Mammary epithelial cell (primary cell): ENCODE measurements at regions of chr4 and their contacts with region 1.

Region 1: GRCh38 chr4:11720292-11720691 is 291.6 kb upstream of the HS3ST1 start:
- DNase-seq: peak; percentile 43
- H3K4me3 ChIP-seq: no peak overlapping the region
- H3K27ac ChIP-seq: peak overlapping the region; percentile 6
- H3K4me1 ChIP-seq: peaks cover 7% of the 10 kb centered on the region
- H3K27me3 ChIP-seq: no peaks in the 10 kb centered on the region
- CTCF ChIP-seq: peak; percentile 89 to 95

Region 2: GRCh38 chr4:11650801-11651596 is 69.3 kb before region 1 on chr4:
- CTCF ChIA-PET with region 1: no interaction called
- dilution Hi-C with region 1: no loop called
- in situ Hi-C with region 1: no loop called
- intact Hi-C with region 1: loop called (anchors 1 kb)
- DNase-seq: no peak
- H3K4me3 ChIP-seq: no peak overlapping the region
- H3K27ac ChIP-seq: no peak overlapping the region
- H3K4me1 ChIP-seq: no peaks in the 10 kb centered on the region
- H3K27me3 ChIP-seq: no peaks in the 10 kb centered on the region
- CTCF ChIP-seq: no peak